ENCODE measurements at regions of chr14 and their contacts with region 1.

Region 1: GRCh38 chr14:102437997-102438915 is 71.3 kb downstream of the ANKRD9 start:
- DNase-seq: peak; percentile 64
- H3K4me3 Mint-ChIP-seq: no peak overlapping the region
- H3K27ac Mint-ChIP-seq: no peak overlapping the region
- H3K4me1 Mint-ChIP-seq: no peaks in the 10 kb centered on the region
- H3K27me3 Mint-ChIP-seq: no peaks in the 10 kb centered on the region

Region 2: DNA sequence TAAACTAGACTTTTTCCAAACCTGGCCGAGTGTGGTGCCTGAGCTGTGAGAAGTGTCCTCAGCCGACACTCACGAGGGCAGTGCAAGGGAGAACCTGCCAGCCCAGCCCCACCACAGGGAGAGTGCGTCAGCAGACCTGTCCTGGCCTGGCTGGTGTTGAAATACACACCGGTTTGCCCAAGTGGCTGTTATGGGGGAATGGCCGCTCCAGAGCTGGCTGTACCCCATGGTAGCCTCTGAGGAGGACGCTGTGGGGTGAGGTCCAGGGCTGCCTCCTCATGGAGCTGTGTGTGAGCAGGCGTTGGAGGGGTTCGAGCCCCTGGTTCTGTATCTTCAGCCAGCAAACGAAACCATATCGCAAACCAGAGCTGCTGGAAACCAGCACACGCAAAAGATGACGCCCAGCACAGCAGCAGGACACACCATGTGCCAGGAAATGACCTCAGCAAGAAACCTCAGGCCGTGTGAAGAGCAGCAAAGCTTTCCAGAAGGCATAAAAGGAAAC is 62.0 kb after region 1 on chr14:
- CTCF ChIA-PET with region 1: interaction called, 20 read pairs
- POLR2A ChIA-PET with region 1: no interaction called
- DNase-seq: peak; percentile 55
- H3K4me3 Mint-ChIP-seq: no peak overlapping the region
- H3K27ac Mint-ChIP-seq: peak overlapping the region; percentile 64
- H3K4me1 Mint-ChIP-seq: peaks cover 19% of the 10 kb centered on the region
- H3K27me3 Mint-ChIP-seq: no peaks in the 10 kb centered on the region

Region 3: GRCh38 chr14:102509744-102510615 is 71.7 kb after region 1 on chr14 and contains the start of gene ANKRD9:
- CTCF ChIA-PET with region 1: interaction called, 45 read pairs
- POLR2A ChIA-PET with region 1: no interaction called
- DNase-seq: peak; percentile 92
- H3K4me3 Mint-ChIP-seq: peak within 1 kb of the TSS; percentile 75
- H3K27ac Mint-ChIP-seq: no peak within 1 kb of the TSS
- H3K4me1 Mint-ChIP-seq: peaks cover 17% of the 10 kb centered on the region
- H3K27me3 Mint-ChIP-seq: no peaks in the 10 kb centered on the region
- total RNA-seq, gene ANKRD9: 11.2 to 12.3 TPM

Region 4: GRCh38 chr14:102516531-102517415 is 78.5 kb after region 1 on chr14:
- CTCF ChIA-PET with region 1: interaction called, 45 read pairs
- POLR2A ChIA-PET with region 1: no interaction called
- DNase-seq: peak; percentile 68
- H3K4me3 Mint-ChIP-seq: peak overlapping the region; percentile 76
- H3K27ac Mint-ChIP-seq: no peak overlapping the region
- H3K4me1 Mint-ChIP-seq: peaks cover 3% of the 10 kb centered on the region
- H3K27me3 Mint-ChIP-seq: peaks cover 12% of the 10 kb centered on the region

Region 5: DNA sequence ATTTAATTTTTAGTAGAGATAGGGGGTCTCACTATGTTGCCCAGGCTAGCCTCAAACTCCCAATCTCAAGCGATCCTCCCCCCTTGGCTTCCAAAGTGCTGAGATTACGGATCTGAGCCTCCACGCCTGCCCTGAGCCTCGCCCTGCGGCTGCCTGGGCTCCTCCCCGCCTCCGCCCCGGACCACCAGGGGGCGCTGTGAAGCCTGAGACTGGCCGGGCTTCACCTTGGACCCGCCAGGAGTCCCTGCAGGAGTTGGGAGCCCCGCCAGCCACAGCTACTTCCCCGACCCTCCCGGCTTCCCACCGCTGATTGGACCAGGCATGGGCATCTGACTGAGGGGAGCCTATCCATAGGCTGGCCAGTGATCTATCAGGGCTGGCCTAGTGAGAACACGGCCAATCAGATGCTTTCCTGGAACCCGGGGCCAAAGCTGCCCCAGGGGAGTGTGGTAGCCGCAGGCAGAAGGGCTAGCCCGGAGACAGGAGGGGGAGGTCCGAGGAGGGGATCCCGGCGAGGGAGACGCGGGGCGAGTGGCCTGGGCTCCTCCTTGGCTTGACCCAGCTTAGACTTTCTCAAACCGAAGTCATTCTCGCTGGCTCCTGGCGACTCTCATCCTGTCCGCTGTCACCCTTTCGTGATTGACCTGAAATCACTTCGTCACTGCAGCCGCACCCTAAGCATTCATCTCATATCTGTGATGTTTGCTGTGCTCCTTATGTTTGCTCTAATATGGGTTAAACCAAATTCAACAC is 86.4 kb after region 1 on chr14:
- CTCF ChIA-PET with region 1: interaction called, 26 read pairs
- POLR2A ChIA-PET with region 1: no interaction called
- DNase-seq: peak; percentile 97
- H3K4me3 Mint-ChIP-seq: peak overlapping the region; percentile 82
- H3K27ac Mint-ChIP-seq: peak overlapping the region; percentile 81
- H3K4me1 Mint-ChIP-seq: peaks cover 42% of the 10 kb centered on the region
- H3K27me3 Mint-ChIP-seq: no peaks in the 10 kb centered on the region

Measured in activated CD4-positive, alpha-beta memory T cell treated with anti-CD3 and anti-CD28 coated beads, Interleukin-2, amount 10 ng/mL, durations not matched to agents 7 days and 5 days (primary cell).